ENCODE measurements at regions of chr3 and their contacts with region 1.

Region 1: GRCh38 chr3:142578327-142579223 is at the start of gene ATR:
- DNase-seq: peak; percentile 97
- H3K4me3 Mint-ChIP-seq: peak within 1 kb of the TSS; percentile 95
- H3K27ac Mint-ChIP-seq: peak within 1 kb of the TSS; percentile 90
- H3K4me1 Mint-ChIP-seq: peaks cover 29% of the 10 kb centered on the region
- H3K27me3 Mint-ChIP-seq: peaks cover 14% of the 10 kb centered on the region
- CTCF ChIP-seq: no peak
- total RNA-seq, gene ATR: 27.2 and 30.2 TPM in 2 replicates

Region 2: DNA sequence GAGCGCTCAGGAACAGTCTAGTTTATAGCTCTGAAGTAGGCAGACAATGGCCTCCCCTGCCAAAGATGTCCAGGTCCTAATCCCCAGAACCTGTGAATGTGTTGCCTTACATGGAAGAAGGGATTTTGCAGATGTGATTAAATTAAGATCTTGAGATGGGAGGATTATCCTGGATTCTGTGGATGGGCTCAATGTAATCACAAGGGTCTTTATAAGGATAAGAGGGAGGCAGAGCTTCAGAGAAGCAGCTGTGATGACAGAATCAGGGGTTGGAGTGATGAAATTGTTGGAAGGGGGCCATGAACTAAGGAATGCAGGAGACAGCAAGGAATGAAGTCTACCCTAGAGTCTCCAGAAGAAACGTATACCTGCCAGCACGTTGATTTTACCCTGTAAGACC is 339.2 kb before region 1 on chr3:
- CTCF ChIA-PET with region 1: no interaction called
- POLR2A ChIA-PET with region 1: no interaction called
- intact Hi-C with region 1: no loop called
- DNase-seq: peak; percentile 55
- H3K4me3 Mint-ChIP-seq: no peak overlapping the region
- H3K27ac Mint-ChIP-seq: no peak overlapping the region
- H3K4me1 Mint-ChIP-seq: peaks cover 13% of the 10 kb centered on the region
- H3K27me3 Mint-ChIP-seq: no peaks in the 10 kb centered on the region
- CTCF ChIP-seq: no peak

Region 3: DNA sequence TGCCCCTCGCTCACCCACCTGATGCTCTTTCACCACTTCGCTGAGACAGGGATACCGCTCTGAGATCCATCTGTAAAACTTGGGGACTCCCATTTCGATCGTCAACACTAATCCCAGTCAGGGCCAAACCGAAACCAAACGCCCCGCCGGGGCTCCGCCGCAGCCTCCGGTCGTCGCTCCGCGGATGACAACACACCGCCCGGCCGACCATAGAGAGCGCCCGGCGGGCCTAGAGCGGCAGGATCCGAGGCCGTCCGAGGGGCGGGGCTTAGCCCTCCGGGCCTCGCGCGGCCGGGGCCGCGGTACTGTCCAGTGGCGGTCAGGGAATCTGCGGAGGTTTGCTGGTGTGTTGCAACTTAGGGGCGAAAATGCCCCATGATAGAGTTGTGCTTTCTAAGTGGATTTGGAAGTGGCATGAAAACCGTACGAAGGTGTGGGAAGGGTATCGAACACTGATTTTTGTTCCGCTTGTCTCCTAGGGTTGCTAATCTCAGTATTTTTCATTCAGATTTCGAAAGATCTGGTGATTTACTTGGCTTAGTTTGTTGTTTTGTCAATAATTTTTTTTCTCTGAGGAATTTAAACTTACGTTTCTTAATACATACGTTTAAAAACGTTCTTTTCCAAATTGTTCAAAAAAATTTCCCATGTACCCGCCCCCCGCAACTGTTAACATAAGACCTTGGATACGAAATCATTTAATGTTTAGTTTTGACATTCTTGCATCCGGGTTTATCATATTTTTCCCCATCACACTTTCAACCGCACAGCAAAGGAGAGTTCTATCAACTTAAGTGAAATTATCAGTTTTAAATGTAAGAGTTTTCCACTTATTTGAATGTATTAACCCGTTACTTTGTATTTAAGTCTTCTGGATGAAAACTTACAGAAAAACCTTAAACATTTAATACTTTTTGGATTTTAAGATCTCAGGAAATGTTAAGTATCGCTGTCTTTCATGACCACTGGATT is 130.4 kb before region 1 on chr3 and contains the start of gene XRN1:
- CTCF ChIA-PET with region 1: no interaction called
- POLR2A ChIA-PET with region 1: interaction called, 19 read pairs
- intact Hi-C with region 1: no loop called
- DNase-seq: peak; percentile 93
- H3K4me3 Mint-ChIP-seq: peak within 1 kb of the TSS; percentile 97
- H3K27ac Mint-ChIP-seq: peak within 1 kb of the TSS; percentile 100
- H3K4me1 Mint-ChIP-seq: peaks cover 28% of the 10 kb centered on the region
- H3K27me3 Mint-ChIP-seq: no peaks in the 10 kb centered on the region
- CTCF ChIP-seq: no peak
- total RNA-seq, gene XRN1: 21.7 and 35.1 TPM in 2 replicates

Region 4: DNA sequence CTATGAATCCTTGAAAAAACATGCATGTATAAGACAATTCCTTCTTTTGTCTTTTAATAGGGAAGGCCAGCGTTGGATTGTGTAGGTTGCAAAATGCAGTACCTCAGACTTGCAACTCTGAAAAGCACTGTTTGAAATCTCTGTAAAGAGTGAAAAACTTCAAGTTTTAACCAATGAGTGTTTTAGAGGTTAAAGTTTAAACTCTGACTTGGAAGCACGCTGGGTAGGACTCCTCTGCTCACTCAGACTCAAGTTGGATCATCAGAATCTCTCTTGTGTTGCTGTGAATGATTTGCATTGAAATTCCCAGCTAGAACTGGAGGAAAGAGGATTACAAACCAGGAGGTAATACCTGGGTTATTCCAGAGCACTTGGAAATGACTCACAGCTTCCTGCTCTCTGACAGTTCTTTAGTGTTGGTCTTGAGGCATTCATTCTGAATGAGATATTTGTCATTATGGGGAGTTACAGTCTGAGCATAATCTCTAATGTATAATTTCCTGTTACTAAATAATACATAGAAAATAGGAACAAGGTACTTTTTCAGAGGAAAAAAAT is 66.7 kb after region 1 on chr3:
- CTCF ChIA-PET with region 1: interaction called, 3 read pairs
- POLR2A ChIA-PET with region 1: interaction called, 10 read pairs
- intact Hi-C with region 1: no loop called
- DNase-seq: peak; percentile 80
- H3K4me3 Mint-ChIP-seq: no peak overlapping the region
- H3K27ac Mint-ChIP-seq: no peak overlapping the region
- H3K4me1 Mint-ChIP-seq: peaks cover 28% of the 10 kb centered on the region
- H3K27me3 Mint-ChIP-seq: no peaks in the 10 kb centered on the region
- CTCF ChIP-seq: no peak

Region 5: GRCh38 chr3:142993958-142994442 is 415.4 kb after region 1 on chr3:
- CTCF ChIA-PET with region 1: interaction called, 13 read pairs
- POLR2A ChIA-PET with region 1: interaction called, 96 read pairs
- intact Hi-C with region 1: no loop called
- DNase-seq: peak; percentile 85
- H3K4me3 Mint-ChIP-seq: no peak overlapping the region
- H3K27ac Mint-ChIP-seq: no peak overlapping the region
- H3K4me1 Mint-ChIP-seq: no peaks in the 10 kb centered on the region
- H3K27me3 Mint-ChIP-seq: no peaks in the 10 kb centered on the region
- CTCF ChIP-seq: peak; percentile 65